ENCODE measurements at regions of chrX and their contacts with region 1.

Region 1: DNA sequence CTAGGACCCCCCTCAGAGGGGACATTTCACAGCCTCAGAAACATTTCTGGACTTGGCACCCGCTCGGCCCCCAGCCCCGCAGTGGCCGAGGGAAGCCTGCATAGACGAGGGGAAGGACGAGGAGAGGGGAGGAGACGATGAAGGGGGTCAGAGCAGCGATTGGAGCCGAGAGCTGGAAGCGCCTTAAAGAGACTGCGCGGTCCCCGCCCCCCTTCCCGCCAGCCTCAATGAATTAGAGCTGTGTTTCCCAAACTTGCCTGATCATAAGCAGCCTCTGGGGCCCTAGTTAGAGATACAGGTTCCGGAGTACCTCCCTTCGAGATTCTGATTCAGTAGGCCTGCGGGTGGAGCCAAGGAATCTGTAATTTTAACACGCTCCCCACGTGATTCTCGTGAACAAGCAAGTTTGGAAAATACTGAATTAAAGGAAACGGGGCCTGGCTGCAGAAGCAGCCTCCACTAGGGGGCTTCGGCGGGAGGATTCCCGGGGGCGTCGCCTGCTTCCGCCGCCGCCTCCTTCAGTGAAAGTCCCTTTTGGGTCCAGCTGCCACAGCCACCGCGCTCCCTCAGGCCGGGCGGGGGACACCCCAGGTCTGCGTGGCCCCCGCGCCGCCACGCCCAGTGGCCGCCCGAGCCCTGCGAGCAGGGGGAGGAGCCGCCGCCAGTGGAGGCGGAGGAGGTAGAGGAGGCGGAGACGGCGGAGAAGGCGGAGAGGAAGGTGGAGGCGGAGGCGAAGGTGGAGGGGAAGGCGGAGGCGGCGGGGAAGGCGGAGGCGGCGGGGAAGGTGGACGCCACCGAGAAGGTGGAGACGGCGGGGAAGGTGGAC is at the start of gene USP27X:
- DNase-seq: peak; percentile 76
- ATAC-seq: peak; percentile 90
- H3K4me3 Mint-ChIP-seq: peak within 1 kb of the TSS; percentile 69
- H3K27ac Mint-ChIP-seq: peak within 1 kb of the TSS; percentile 70
- H3K4me1 Mint-ChIP-seq: peaks cover 25% of the 10 kb centered on the region
- H3K27me3 Mint-ChIP-seq: no peaks in the 10 kb centered on the region
- CTCF ChIP-seq: peak; percentile 34
- total RNA-seq, gene USP27X: 1.0 to 1.3 TPM

Region 2: DNA sequence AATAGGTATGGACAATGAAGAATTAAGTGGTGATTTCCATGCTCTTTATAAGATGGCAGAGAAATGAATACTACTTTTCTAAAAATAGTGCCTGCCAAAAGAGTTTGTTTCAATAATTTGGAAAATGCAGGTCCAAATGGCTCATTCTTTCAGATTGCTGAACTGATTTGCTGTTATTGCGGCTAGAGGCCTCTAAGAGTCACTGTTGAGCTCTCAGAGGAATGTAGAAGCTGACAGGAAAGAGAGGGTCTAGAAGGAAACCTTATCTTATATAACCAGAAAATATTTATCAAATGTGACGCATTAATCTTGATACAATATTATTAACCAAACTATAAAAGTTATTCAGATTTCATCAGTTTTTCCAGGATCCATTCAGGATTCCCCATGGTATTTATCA is 117.6 kb before region 1 on chrX:
- CTCF ChIA-PET with region 1: interaction called, 3 read pairs
- POLR2A ChIA-PET with region 1: no interaction called
- intact Hi-C with region 1: loop called (anchors 10 kb)
- DNase-seq: peak; percentile 14
- ATAC-seq: no peak
- H3K4me3 Mint-ChIP-seq: no peak overlapping the region
- H3K27ac Mint-ChIP-seq: no peak overlapping the region
- H3K4me1 Mint-ChIP-seq: no peaks in the 10 kb centered on the region
- H3K27me3 Mint-ChIP-seq: no peaks in the 10 kb centered on the region
- CTCF ChIP-seq: peak; percentile 46